SK-N-SH (cell line): ENCODE measurements at regions of chr1 and their contacts with region 1.

Region 1: DNA sequence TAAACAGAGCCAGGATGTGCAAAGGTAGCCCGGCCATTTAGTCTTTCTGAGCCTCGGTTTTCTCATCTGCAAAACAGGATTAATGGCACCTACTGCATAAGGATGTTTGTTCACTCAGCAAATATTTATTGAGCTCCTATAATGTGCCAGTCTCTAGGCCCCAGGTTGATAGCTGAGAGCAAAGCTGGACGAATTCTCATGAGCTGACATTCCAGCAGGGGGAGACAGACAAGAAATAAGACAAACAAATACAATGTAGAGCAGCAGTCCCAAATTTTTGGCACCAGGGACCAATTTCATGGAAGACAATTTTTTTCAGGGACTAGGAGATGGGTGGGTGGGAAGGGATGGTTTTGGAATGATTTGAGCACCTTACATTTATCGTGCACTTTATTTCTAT is 74.3 kb upstream of the PAX7 start:
- DNase-seq: peak; percentile 42
- H3K4me3 ChIP-seq: no peak overlapping the region; a peak in 1 of 4 replicates
- H3K27ac ChIP-seq: no peak overlapping the region
- H3K4me1 ChIP-seq: no peaks in the 10 kb centered on the region
- H3K27me3 ChIP-seq: no peaks in the 10 kb centered on the region; the same call in 1 of the 2 replicates
- CTCF ChIP-seq: peak; percentile 44
- EP300 ChIP-seq: no peak
- RAD21 ChIP-seq: peak; percentile 26

Region 2: DNA sequence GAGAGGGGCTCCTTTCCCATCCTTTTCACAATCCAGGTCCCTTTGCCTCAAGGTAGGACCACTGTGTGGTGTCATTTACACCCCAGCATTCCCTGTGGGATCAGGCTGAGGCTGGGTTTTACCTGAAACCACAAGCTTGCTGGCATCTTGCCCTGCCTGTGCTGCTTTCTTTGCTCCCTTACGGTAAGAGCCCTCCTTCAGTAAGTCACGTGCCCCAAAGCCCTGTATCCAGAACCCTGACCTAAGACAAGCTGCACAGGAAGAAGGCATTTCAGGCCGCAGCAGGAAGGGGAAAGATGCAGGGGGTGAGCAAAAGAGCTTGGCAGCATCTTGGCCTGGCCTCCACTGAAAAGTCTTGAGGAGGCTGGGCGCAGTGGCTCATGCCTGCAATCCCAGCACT is 17.2 kb before region 1 on chr1:
- CTCF ChIA-PET with region 1: interaction called, 10 read pairs
- POLR2A ChIA-PET with region 1: no interaction called
- DNase-seq: no peak
- H3K4me3 ChIP-seq: no peak overlapping the region
- H3K27ac ChIP-seq: no peak overlapping the region
- H3K4me1 ChIP-seq: no peaks in the 10 kb centered on the region; a peak in 1 of 4 replicates
- H3K27me3 ChIP-seq: no peaks in the 10 kb centered on the region
- CTCF ChIP-seq: no peak
- EP300 ChIP-seq: no peak
- RAD21 ChIP-seq: no peak

Region 3: GRCh38 chr1:18569811-18570545 is 13.6 kb after region 1 on chr1:
- CTCF ChIA-PET with region 1: interaction called, 83 read pairs
- POLR2A ChIA-PET with region 1: no interaction called
- DNase-seq: peak; percentile 32
- H3K4me3 ChIP-seq: no peak overlapping the region
- H3K27ac ChIP-seq: peak overlapping the region in 1 of 2 experiments; percentile 35; a peak in 2 of 4 replicates
- H3K4me1 ChIP-seq: peaks cover 0 to 15% of the 10 kb centered on the region in 2 experiments; a peak in 1 of 4 replicates
- H3K27me3 ChIP-seq: no peaks in the 10 kb centered on the region
- CTCF ChIP-seq: no peak
- EP300 ChIP-seq: peak in 1 of 2 experiments; percentile 2; a peak in 1 of 4 replicates
- RAD21 ChIP-seq: no peak

Region 4: GRCh38 chr1:18649693-18650370 is 93.5 kb after region 1 on chr1:
- CTCF ChIA-PET with region 1: no interaction called
- POLR2A ChIA-PET with region 1: no interaction called
- DNase-seq: peak; percentile 35
- H3K4me3 ChIP-seq: no peak overlapping the region
- H3K27ac ChIP-seq: no peak overlapping the region
- H3K4me1 ChIP-seq: no peaks in the 10 kb centered on the region; a peak in 1 of 4 replicates
- H3K27me3 ChIP-seq: peaks cover 55% of the 10 kb centered on the region
- CTCF ChIP-seq: no peak
- EP300 ChIP-seq: no peak
- RAD21 ChIP-seq: no peak